Body of pancreas (tissue), 4 donors: ENCODE measurements at regions of chr15 and their contacts with region 1.

Region 1: DNA sequence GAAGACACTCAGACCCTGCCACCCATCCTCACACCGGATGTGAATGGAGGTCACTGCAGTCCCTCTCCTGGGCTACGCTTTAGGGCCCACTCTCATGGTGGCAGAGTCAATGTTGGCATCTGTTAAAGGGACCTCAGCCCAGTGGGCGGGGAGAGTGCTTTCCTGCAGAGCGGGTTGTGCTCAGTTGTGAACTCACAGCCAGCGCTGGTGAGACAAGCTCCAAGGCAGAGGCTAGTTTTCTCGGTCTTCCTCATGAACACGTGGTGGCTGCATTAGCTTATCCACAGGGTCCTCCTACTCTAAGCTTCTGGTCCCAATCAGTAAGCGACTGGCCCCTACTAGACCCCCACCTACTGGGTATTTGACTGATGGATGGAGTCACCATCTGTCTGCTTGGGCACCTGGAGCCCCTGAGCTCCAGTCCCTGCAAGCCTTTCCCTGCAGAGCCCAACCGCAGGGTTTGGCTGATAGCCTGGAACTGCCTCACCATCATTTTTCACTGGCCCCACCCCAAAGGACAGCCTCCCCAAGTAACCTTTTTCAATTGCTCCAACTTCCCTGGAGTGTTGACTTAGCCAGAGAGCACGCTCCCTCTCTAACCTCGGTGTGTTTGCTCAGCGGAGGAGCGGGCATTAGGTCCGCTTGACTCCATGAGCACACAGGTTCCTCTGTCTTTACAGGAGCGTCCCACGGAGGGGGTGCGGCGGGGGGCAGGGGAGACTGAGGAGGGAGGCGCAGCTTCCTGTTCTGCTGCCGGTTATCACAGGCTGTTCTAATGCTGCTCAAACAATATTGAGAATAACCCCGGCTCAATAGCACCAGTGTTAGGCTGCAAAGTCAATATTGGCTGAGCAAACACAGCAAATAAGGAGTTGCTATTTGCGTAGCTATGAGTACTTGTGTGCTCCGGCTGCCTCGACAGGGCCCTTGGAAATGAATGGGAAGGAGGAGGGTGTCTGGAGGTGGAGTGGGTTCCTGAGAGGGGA is 141.7 kb downstream of the RPLP1 start:
- DNase-seq: peak; percentile 92 to 95 (median 94)
- ATAC-seq: peak; percentile 79
- H3K4me3 ChIP-seq: no peak overlapping the region
- H3K27ac ChIP-seq: peak overlapping the region; percentile 85 to 95 (median 92)
- H3K4me1 ChIP-seq: peaks cover 73% of the 10 kb centered on the region
- H3K27me3 ChIP-seq: no peaks in the 10 kb centered on the region
- CTCF ChIP-seq: no peak
- POLR2A ChIP-seq: peak in 2 of 3 donors; percentile 55 to 58

Region 2: DNA sequence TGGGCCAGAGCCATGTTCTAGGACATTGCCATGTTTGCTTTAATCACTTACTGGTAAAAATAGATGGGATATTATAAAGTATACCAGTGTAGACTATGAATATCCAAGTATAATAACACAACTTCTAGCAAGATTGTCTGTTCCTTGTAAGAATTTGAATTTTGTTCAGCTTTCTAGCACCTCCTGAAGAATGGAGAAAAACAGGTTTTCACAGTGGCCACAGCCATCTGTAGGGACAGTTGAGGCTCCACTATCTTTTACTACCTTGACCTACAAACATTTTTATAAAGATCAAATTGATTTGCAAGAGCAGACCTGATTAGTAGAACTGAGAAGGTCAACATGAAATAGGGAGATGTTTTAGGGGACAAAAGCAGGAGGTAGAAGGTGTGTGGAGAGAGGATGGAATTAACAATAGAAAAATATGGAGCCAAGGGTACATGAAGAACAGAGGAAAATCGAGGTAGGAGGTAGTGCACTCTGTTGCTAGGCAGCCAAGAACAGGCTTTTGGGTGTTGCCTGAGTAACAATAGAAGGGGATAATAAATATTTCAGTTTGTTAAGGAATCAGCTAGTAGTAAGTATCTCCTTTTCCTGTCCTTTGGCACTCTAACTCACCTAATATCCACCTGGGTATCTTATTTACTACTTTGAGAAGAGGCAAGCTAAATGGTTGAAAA is 654.9 kb before region 1 on chr15:
- intact Hi-C with region 1: no loop called
- DNase-seq: no peak
- ATAC-seq: no peak
- H3K4me3 ChIP-seq: no peak overlapping the region
- H3K27ac ChIP-seq: no peak overlapping the region
- H3K4me1 ChIP-seq: no peaks in the 10 kb centered on the region
- H3K27me3 ChIP-seq: no peaks in the 10 kb centered on the region
- CTCF ChIP-seq: no peak
- POLR2A ChIP-seq: no peak

Region 3: GRCh38 chr15:69320977-69321554 is 273.2 kb before region 1 on chr15:
- intact Hi-C with region 1: no loop called
- DNase-seq: no peak
- ATAC-seq: no peak
- H3K4me3 ChIP-seq: no peak overlapping the region
- H3K27ac ChIP-seq: no peak overlapping the region
- H3K4me1 ChIP-seq: peaks cover 37% of the 10 kb centered on the region
- H3K27me3 ChIP-seq: no peaks in the 10 kb centered on the region
- CTCF ChIP-seq: no peak
- POLR2A ChIP-seq: no peak

Region 4: DNA sequence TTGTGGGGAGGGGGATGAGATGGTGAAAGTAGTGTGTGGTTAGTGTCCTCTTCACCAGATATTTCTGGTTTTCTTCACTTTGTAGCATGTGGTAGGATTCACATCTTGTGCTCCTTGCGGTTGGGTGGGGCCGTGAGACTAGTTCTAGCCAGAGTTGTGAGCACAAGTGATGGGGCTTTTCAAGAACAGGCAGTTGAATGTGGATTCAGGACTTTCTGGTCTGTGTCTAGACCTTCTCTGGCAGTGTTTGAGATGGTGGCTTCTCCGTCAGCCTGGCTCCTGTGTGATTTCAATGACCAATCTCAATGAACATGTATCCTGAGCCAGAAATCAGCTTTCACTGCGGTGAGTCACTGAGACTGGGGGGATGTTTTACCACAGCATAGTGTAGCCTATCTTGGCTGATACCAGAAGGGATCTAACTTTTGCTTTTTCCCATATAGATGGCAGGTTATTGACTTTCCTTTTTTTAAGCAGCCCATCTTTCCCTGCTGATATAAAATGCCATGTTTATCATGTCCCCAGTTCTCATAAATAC is 59.1 kb before region 1 on chr15:
- intact Hi-C with region 1: no loop called
- DNase-seq: no peak
- ATAC-seq: no peak
- H3K4me3 ChIP-seq: no peak overlapping the region
- H3K27ac ChIP-seq: no peak overlapping the region
- H3K4me1 ChIP-seq: no peaks in the 10 kb centered on the region
- H3K27me3 ChIP-seq: no peaks in the 10 kb centered on the region
- CTCF ChIP-seq: no peak
- POLR2A ChIP-seq: no peak

Region 5: DNA sequence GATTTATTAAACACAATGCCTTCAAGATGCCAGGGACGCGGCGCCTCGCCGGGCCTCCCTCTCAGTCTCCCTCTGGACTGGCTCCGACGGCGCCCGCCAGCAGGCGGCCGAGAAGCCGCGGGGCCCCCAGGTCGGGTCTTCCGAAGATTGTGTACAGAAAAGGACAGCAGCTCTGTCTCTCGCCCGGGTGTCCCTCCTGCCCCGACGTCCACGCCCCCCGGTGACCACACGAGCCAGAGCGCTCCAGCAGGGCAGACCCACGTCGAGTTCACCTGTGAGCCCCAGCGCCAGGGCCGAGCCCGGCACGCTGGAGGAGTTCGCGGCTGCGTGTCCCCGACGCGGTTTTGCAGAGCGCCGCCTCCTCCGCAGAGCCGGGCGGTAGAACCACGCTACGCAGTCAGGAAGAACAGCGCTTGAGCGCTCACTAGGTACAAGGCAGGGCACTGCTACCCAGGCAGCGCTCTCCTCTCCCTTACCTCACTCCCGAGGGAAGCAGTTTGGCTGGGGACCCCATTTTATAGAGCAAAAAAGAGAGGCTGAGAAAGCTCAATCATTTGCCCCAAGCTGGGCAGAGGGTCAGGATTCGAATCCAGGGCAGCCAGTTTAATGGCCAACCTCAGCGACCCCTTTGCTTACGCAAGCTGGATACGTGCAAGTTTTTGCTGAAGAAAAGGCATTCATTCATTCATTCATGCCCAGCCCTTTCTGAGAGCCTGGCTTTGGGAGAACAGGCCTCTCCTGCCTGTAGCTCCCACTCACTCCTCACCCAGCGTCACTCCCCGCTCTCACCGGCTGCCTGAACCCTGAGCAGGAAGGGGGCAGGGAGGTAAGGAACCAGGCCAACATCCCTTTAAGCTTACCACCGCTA is 506.4 kb after region 1 on chr15:
- intact Hi-C with region 1: loop called (anchors 10 kb)
- DNase-seq: peak; percentile 44 to 60 (median 49)
- ATAC-seq: no peak
- H3K4me3 ChIP-seq: no peak overlapping the region
- H3K27ac ChIP-seq: peak overlapping the region; percentile 0 to 76 (median 48)
- H3K4me1 ChIP-seq: peaks cover 70% of the 10 kb centered on the region
- H3K27me3 ChIP-seq: no peaks in the 10 kb centered on the region
- CTCF ChIP-seq: peak in 5 of 7 experiments; percentile 9 to 32 (median 27)
- POLR2A ChIP-seq: no peak